Endothelial cell of umbilical vein (primary cell): ENCODE measurements at regions of chr21 and their contacts with region 1.

Region 1: GRCh38 chr21:45439161-45439872 is 34.4 kb downstream of the COL18A1 start:
- DNase-seq: peak; percentile 91
- H3K4me3 ChIP-seq: peak overlapping the region in 2 of 3 experiments; percentile 7 to 26
- H3K27ac ChIP-seq: peak overlapping the region; percentile 82
- H3K4me1 ChIP-seq: peaks cover 15% of the 10 kb centered on the region
- H3K27me3 ChIP-seq: no peaks in the 10 kb centered on the region
- CTCF ChIP-seq: peak; percentile 94 to 96
- POLR2A ChIP-seq: no peak

Region 2: GRCh38 chr21:45356251-45356650 is 83.1 kb before region 1 on chr21:
- CTCF ChIA-PET with region 1: no interaction called
- POLR2A ChIA-PET with region 1: no interaction called
- dilution Hi-C with region 1: no loop called
- intact Hi-C with region 1: no loop called
- DNase-seq: no peak
- H3K4me3 ChIP-seq: no peak overlapping the region
- H3K27ac ChIP-seq: no peak overlapping the region
- H3K4me1 ChIP-seq: peaks cover 5% of the 10 kb centered on the region
- H3K27me3 ChIP-seq: no peaks in the 10 kb centered on the region
- CTCF ChIP-seq: peak in 1 of 2 donors; percentile 9
- POLR2A ChIP-seq: no peak

Region 3: GRCh38 chr21:45404730-45405270 is 34.5 kb before region 1 on chr21 and contains the start of gene COL18A1:
- CTCF ChIA-PET with region 1: interaction called, 8 read pairs
- POLR2A ChIA-PET with region 1: no interaction called
- dilution Hi-C with region 1: no loop called
- intact Hi-C with region 1: loop called (anchors 2 kb)
- DNase-seq: peak; percentile 39
- H3K4me3 ChIP-seq: peak within 1 kb of the TSS; percentile 72 to 87 (median 79)
- H3K27ac ChIP-seq: peak within 1 kb of the TSS; percentile 95
- H3K4me1 ChIP-seq: peaks cover 18% of the 10 kb centered on the region
- H3K27me3 ChIP-seq: no peaks in the 10 kb centered on the region
- CTCF ChIP-seq: no peak
- POLR2A ChIP-seq: no peak
- total RNA-seq, gene COL18A1: 252 and 274 TPM in 2 replicates

Region 4: DNA sequence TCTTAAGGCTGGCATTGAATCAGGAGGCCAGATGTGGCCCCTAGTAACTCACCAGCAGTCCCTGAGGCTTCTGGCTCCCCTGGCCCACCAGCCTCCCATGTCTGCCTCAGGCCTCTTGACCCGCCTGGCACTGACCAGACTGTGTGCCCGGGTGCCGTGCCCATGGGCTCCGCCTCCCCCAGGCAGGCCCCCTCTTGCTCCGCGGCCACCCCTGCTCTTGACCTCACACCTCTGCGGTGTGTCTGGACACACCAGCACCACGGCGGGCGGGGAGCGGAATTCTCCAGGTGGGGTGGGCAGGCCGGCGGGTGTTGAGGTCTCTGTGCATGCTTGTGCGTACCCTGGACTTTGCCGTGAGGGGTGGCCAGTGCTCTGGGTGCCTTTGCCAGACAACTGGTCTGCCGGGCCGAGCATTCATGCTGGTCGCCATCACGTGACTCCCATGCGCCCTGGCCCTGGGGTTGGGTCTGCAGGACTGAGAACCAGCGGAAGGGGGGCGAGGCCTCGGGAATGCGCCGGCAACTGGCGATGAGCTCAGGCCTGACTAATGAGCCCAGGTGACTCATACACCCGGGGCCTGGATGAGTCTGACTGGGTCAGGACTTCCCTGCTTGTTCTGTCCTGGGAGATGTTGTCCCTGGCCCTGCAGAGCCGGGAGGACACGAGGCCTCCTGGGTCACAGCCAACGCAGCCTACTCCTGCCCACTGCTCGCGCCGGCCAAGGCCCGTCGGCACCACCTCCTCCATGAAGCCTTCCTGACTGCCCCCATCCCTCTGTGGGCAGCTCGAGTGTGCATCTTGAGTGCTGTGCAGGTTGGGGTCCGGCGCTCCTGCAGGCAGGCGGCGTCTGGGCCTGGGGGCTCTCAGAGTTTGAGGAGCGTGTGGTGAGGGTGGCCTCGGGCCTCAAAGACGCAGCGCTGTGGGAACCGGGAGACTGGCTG is 11.7 kb before region 1 on chr21:
- CTCF ChIA-PET with region 1: no interaction called
- POLR2A ChIA-PET with region 1: no interaction called
- dilution Hi-C with region 1: no loop called
- intact Hi-C with region 1: no loop called
- DNase-seq: peak; percentile 81
- H3K4me3 ChIP-seq: no peak overlapping the region
- H3K27ac ChIP-seq: peak overlapping the region; percentile 69
- H3K4me1 ChIP-seq: peaks cover 20% of the 10 kb centered on the region
- H3K27me3 ChIP-seq: no peaks in the 10 kb centered on the region
- CTCF ChIP-seq: no peak
- POLR2A ChIP-seq: no peak